Breast epithelium (tissue), 4 donors: ENCODE measurements at regions of chr10 and their contacts with region 1.

Region 1: GRCh38 chr10:74445493-74445892 is 294.5 kb downstream of the ADK start:
- DNase-seq: no peak
- H3K4me3 ChIP-seq: no peak overlapping the region
- H3K27ac ChIP-seq: no peak overlapping the region
- H3K4me1 ChIP-seq: no peaks in the 10 kb centered on the region
- H3K27me3 ChIP-seq: no peaks in the 10 kb centered on the region
- CTCF ChIP-seq: no peak
- POLR2A ChIP-seq: no peak

Region 2: DNA sequence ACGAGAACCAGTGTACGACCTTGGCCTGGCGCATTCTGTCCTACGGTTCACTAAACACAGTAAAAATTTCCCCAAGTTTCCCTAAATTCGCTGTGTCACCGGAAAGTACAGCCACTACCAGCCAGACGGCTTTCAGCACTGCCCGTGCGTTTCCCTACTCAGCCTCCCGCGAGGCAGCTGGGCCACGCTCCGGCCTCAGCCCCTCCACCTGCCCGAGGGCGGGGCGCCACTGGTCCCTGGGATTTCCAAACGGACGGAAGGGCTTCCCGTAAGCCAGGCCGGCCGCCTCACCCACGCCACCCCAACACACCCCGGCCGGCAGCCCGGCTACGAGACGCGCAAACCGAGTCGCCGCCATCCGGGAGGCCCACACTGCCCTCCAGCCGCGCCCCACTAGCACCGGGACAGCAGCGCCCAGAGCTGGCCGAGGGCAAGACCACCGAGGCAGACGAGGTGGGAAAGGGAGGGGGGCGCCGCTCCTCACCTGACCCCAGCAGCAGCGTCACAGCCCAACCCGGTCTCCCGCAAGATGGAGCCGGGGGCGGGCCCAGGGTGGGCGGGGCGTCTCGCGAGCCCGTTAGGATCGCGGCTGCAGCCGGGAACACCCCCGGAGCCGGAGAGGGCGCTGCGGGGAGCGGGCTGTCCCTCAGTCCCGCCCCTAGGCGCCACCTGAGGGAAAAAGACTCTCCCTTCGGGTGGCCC is 1031.8 kb before region 1 on chr10 and contains the start of gene ANXA7:
- intact Hi-C with region 1: loop called (anchors 10 kb)
- DNase-seq: peak; percentile 91 to 93
- H3K4me3 ChIP-seq: peak within 1 kb of the TSS; percentile 75 to 91 (median 88)
- H3K27ac ChIP-seq: peak within 1 kb of the TSS; percentile 98
- H3K4me1 ChIP-seq: no peaks in the 10 kb centered on the region
- H3K27me3 ChIP-seq: no peaks in the 10 kb centered on the region
- CTCF ChIP-seq: peak in 1 of 3 donors; percentile 29
- POLR2A ChIP-seq: peak; percentile 75
- total RNA-seq, gene ANXA7: 120 to 169 (median 123) TPM

Region 3: DNA sequence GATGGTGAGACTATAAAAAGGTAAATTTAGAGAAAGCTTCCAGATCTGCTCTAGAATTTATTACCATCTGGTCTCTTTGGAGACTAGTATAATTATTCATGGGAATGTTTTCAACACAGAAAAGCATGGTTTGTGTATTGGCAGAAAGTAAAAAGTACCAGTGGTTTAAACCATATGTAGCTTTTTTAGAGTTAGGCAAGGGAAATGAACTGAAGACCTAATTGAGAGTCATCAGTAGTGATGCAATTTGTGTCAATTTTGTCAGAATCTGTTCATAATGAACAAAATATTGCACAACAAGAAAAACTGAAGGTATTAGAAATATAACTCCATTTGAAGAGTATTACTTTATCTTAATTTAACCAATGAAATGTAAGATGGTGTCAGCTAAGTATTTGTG is 113.1 kb before region 1 on chr10:
- intact Hi-C with region 1: no loop called
- DNase-seq: no peak
- H3K4me3 ChIP-seq: no peak overlapping the region
- H3K27ac ChIP-seq: no peak overlapping the region
- H3K4me1 ChIP-seq: no peaks in the 10 kb centered on the region
- H3K27me3 ChIP-seq: no peaks in the 10 kb centered on the region
- CTCF ChIP-seq: no peak
- POLR2A ChIP-seq: no peak

Region 4: GRCh38 chr10:74425456-74426001 is 20.0 kb before region 1 on chr10:
- intact Hi-C with region 1: no loop called
- DNase-seq: no peak
- H3K4me3 ChIP-seq: no peak overlapping the region
- H3K27ac ChIP-seq: no peak overlapping the region
- H3K4me1 ChIP-seq: no peaks in the 10 kb centered on the region
- H3K27me3 ChIP-seq: no peaks in the 10 kb centered on the region
- CTCF ChIP-seq: no peak
- POLR2A ChIP-seq: no peak